ENCODE measurements at regions of chr16 and their contacts with region 1.

Region 1: DNA sequence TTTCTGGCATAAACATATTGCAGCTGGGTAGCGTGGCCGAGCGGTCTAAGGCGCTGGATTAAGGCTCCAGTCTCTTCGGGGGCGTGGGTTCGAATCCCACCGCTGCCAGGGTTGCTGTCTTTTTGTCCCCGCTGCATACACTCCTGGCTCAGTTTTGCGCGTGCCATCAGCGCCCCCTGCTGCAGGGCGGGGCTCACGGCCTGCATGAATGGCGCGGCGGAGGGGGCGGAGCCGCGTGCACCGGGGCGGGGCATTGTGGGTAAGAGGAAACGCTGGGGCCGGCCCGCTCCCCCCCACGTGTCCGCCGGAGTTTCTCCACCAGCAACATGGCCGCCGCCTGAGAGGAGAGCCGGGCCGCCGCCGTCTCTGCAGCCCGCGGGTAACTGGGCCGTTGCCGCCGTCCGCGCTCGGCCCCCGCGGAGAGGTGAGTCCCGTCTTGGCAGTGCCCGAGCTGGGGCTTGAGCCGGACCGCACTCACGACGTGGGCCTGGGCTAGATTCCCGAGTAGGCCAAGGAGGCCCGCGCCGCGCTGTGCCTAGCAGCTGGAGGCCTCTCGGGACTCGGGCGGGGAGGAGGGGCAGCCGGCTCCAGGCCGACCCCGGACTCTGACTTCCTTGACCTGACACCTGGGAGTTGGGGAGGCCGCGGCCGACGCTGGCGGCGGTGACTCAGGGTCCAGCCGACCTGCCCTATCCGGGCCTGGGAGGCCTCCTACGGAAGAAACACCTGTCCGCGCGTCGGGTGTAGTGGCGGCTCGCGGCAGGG is at the start of gene POLR3E:
- DNase-seq: peak; percentile 100
- ATAC-seq: peak; percentile 94
- H3K4me3 Mint-ChIP-seq: peak within 1 kb of the TSS; percentile 91
- H3K27ac Mint-ChIP-seq: peak within 1 kb of the TSS; percentile 92
- H3K4me1 Mint-ChIP-seq: peaks cover 45% of the 10 kb centered on the region
- H3K27me3 Mint-ChIP-seq: no peaks in the 10 kb centered on the region
- CTCF ChIP-seq: peak; percentile 57
- total RNA-seq, gene POLR3E: 92.3 and 97.1 TPM in 2 replicates

Region 2: DNA sequence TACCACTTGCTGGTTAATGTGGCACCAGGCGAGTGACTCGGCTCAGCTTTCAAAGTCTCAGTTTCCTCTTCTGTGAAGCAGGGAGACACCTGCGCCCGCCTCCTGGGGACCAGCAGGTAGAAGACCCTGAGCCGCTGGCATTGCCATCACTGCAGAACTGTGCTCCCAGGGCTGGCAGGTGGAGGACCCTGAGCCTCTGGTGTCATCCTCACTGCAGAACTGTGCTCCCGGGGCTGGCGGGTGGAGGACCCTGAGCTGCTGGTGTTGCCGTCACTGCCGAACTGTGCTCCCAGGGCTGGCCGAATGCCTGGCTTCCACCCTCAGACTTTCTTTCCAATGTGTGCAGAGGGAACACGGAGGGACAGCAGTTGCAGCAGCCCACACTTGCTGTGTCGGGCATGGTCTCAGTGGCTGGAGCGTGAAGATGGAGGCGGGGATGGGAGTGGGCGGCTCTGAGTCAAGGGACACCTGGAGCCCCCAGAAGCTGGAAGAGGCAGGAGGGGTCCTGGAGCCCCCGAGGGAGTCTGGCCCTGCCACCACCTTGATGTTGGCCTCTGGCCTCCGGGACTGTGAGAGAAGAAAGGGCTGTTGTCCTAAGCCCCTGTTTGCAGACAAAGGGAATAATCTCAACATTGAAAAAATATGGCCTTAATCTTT is 773.8 kb before region 1 on chr16:
- CTCF ChIA-PET with region 1: no interaction called
- POLR2A ChIA-PET with region 1: no interaction called
- intact Hi-C with region 1: loop called (anchors 5 kb)
- DNase-seq: no peak
- ATAC-seq: no peak
- H3K4me3 Mint-ChIP-seq: no peak overlapping the region
- H3K27ac Mint-ChIP-seq: peak overlapping the region; percentile 39
- H3K4me1 Mint-ChIP-seq: peaks cover 3% of the 10 kb centered on the region
- H3K27me3 Mint-ChIP-seq: no peaks in the 10 kb centered on the region
- CTCF ChIP-seq: no peak

Region 3: GRCh38 chr16:21952793-21953540 is 344.3 kb before region 1 on chr16 and contains the start of gene UQCRC2:
- CTCF ChIA-PET with region 1: interaction called, 3 read pairs
- POLR2A ChIA-PET with region 1: interaction called, 5 read pairs
- intact Hi-C with region 1: loop called (anchors 1 kb)
- DNase-seq: peak; percentile 76
- ATAC-seq: peak; percentile 89
- H3K4me3 Mint-ChIP-seq: peak within 1 kb of the TSS; percentile 98
- H3K27ac Mint-ChIP-seq: peak within 1 kb of the TSS; percentile 98
- H3K4me1 Mint-ChIP-seq: peaks cover 65% of the 10 kb centered on the region
- H3K27me3 Mint-ChIP-seq: no peaks in the 10 kb centered on the region
- CTCF ChIP-seq: no peak
- total RNA-seq, gene UQCRC2: 207 and 230 TPM in 2 replicates

Region 4: DNA sequence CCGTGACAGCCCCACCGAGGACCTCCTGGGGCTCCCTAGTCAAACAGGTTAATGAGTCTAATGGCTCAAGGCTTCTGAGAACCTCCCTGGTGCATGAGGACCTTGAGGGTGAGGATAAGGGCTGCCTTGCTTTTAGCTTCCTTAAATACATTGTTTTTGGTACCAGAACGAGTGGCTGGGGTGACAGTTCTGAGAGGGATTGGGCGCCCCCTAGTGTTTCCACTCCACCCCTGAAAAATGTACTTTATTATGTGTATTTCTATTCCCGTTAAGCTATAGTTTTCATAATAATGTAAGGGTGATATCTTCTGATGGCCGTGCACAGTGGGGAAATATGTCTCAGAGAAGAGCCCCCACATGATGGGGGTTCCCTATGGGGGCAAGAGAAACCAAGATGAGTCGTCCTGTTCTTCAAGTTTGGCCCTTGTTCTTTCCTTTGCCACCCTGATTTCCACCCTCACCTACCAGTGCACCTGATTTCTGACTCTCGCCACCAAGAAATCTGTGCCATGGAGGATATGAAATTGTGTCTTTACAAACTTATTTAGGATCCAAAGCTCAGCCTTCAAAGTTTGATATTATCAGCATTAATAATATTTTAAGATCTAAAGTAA is 219.5 kb before region 1 on chr16:
- CTCF ChIA-PET with region 1: interaction called, 6 read pairs
- POLR2A ChIA-PET with region 1: interaction called, 3 read pairs
- intact Hi-C with region 1: loop called (anchors 1 kb)
- DNase-seq: peak; percentile 49
- ATAC-seq: peak; percentile 60
- H3K4me3 Mint-ChIP-seq: no peak overlapping the region
- H3K27ac Mint-ChIP-seq: no peak overlapping the region
- H3K4me1 Mint-ChIP-seq: no peaks in the 10 kb centered on the region
- H3K27me3 Mint-ChIP-seq: no peaks in the 10 kb centered on the region
- CTCF ChIP-seq: peak; percentile 91

Region 5: DNA sequence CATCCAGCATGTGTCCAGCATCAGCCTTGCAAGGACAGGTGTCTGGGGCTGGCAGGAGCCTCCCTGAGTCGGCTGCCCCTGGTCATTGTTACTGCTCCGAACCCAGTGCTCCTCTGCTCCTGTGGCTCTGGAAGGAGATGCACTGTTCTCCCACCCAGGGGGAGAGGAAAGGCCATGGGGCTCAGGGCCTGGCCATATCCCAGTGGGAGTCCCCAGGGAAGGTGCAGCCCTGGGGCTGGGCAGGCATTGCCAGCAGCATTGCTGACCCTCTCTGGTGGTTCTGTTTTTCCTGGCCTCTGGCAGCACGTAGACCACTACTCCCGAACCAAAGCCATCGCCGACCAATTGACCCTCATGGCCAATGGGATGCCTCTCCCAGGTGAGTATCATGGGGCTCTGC is 125.3 kb before region 1 on chr16:
- CTCF ChIA-PET with region 1: no interaction called
- POLR2A ChIA-PET with region 1: no interaction called
- intact Hi-C with region 1: no loop called
- DNase-seq: no peak
- ATAC-seq: no peak
- H3K4me3 Mint-ChIP-seq: no peak overlapping the region
- H3K27ac Mint-ChIP-seq: no peak overlapping the region
- H3K4me1 Mint-ChIP-seq: peaks cover 3% of the 10 kb centered on the region
- H3K27me3 Mint-ChIP-seq: no peaks in the 10 kb centered on the region
- CTCF ChIP-seq: no peak

Region 6: DNA sequence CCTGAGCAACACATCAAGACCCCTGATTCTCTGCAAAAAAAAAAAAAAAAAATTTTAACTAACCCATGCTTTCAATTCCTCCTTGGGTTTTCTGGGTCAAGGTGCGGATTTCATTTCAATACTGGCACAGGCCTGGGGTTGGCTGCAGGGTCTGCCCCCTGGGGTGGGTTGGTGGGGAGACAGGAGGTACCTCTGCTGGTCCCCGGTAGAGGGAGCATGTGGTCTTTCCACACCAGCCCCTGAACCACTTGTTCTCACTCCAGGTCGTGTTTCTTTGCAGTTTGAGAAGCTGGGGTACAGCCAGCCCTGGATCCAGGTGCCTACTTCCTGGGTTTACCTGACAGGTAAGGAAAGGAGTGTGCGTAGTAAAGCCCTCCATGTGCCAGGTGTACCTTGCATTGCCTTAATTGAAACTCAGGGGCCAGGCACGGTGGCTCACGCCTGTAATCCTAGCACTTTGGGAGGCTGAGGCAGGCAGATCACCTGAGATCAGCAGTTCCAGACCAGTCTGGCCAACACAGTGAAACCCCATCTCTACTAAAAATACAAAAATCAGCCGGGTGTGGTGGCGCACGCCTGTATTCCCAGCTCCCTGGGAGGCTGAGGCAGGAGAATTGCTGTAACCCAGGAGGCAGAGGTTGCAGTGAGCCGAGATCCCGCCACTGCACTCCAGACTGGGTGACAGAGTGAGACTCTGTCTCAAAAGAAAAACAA is 113.2 kb before region 1 on chr16:
- CTCF ChIA-PET with region 1: interaction called, 15 read pairs
- POLR2A ChIA-PET with region 1: interaction called, 53 read pairs
- intact Hi-C with region 1: loop called (anchors 1 kb)
- DNase-seq: no peak
- ATAC-seq: peak; percentile 63
- H3K4me3 Mint-ChIP-seq: no peak overlapping the region
- H3K27ac Mint-ChIP-seq: no peak overlapping the region
- H3K4me1 Mint-ChIP-seq: peaks cover 16% of the 10 kb centered on the region
- H3K27me3 Mint-ChIP-seq: no peaks in the 10 kb centered on the region
- CTCF ChIP-seq: no peak

Region 7: GRCh38 chr16:22217889-22218730 is 79.2 kb before region 1 on chr16:
- CTCF ChIA-PET with region 1: no interaction called
- POLR2A ChIA-PET with region 1: interaction called, 3 read pairs
- intact Hi-C with region 1: loop called (anchors 1 kb)
- DNase-seq: peak; percentile 29
- ATAC-seq: peak; percentile 86
- H3K4me3 Mint-ChIP-seq: peak overlapping the region; percentile 52
- H3K27ac Mint-ChIP-seq: peak overlapping the region; percentile 85
- H3K4me1 Mint-ChIP-seq: peaks cover 26% of the 10 kb centered on the region
- H3K27me3 Mint-ChIP-seq: no peaks in the 10 kb centered on the region
- CTCF ChIP-seq: no peak

Region 8: DNA sequence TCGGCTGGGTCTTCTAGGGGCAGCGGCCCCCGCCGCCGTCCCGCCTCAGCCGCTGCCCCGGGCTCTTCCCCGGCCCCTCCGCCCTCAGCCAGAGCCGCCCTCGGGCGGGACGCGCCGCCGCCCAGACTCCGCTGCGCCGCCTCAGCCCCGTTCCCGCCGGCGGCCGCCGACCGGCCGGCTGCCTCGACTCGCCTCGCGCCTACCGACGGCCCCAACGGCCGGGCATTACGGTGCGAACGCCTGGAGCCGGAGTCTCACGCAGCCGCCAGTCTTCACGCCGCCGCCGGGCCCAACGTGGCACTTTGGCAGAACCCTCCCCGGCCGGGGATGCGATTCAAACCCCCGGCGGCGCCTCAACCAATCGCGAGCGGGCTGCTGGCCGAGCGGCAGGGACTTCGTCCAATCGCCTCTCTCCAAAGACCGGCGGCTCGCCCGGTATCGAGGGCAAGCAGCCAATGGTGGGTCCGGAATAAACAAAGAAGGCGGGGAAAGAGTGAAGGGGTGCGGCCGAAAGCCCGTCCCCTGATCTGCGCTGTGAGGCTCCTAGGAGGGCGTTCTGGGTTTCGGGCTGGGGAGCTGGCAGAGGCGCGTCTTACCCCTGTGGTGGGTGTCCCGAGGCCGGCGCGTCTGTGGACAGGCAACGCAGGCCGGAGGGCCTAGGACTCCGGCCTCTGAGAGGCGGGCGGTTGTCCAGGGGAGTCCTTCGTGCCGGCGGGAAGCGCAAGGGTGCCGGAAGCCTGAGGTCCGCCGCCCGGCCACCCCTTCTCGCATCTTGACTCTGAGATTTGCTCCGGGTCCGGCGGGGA is 77.2 kb after region 1 on chr16 and contains the start of gene CDR2:
- CTCF ChIA-PET with region 1: no interaction called
- POLR2A ChIA-PET with region 1: no interaction called
- intact Hi-C with region 1: loop called (anchors 1 kb)
- DNase-seq: peak; percentile 90
- ATAC-seq: peak; percentile 95
- H3K4me3 Mint-ChIP-seq: peak within 1 kb of the TSS; percentile 94
- H3K27ac Mint-ChIP-seq: peak within 1 kb of the TSS; percentile 70
- H3K4me1 Mint-ChIP-seq: peaks cover 22% of the 10 kb centered on the region
- H3K27me3 Mint-ChIP-seq: no peaks in the 10 kb centered on the region
- CTCF ChIP-seq: no peak
- total RNA-seq, gene CDR2: 6.2 and 6.7 TPM in 2 replicates

Measured in activated B cell treated with CpG ODN at 0.5 μM for 24 hours (primary cell).